ENCODE measurements at regions of chrX and their contacts with region 1.

Region 1: DNA sequence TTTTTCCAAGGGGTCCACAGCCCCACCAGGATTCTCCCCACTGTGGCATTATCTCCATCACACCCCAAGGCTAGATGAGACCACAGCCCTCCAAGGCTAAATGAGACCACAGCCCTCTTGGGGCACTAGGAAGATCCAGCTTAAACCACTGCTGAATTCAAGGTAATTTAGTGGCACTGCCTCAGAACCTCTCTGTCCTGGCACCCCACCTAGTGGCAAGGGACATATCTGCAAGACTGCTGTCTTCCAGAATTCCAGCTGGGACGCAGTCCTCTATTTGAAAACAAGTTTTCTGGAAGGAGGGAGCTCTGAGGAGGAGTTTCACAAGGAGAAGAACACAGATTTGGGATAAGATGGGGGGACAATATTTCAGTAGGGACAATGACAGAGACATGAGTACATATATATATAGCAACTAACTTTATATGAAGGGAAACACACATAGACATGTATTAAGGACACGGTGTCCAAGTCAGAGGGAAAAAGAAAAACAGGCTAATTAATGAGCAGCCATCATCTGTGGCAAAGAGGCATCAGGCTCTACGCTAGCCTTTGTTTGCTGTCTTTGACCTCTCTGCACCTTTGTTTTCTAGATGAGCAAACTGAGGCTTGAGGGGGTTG is 9.3 kb downstream of the CETN2 start:
- DNase-seq: no peak
- ATAC-seq: peak; percentile 64; the same call in 1 of the 2 replicates
- H3K4me3 ChIP-seq: no peak overlapping the region
- H3K27ac ChIP-seq: no peak overlapping the region
- H3K4me1 ChIP-seq: no peaks in the 10 kb centered on the region
- H3K27me3 ChIP-seq: peaks cover 4% of the 10 kb centered on the region; the same call in 1 of the 2 replicates
- CTCF ChIP-seq: peak; percentile 85

Region 2: DNA sequence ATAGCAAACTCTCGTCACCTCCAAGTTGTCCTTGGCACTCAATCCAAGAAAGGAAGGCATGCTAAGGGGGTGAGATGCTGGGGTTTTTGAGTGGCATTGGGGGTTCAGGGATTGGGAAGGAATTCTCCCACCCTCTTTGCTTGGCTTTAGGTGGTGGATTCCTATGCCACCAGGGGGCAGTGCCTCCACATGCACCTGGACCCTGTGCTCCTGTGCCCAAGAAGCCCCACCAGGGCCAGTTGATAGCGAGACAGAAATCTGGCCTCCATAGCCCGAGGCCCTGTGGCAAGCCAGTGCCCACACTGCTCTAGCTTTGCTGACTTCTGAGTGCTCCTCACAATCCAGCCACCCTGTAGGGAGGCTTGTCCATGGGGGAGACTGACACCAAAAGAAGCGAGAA is 1107.4 kb before region 1 on chrX:
- CTCF ChIA-PET with region 1: no interaction called
- POLR2A ChIA-PET with region 1: no interaction called
- in situ Hi-C with region 1: no loop called
- intact Hi-C with region 1: loop called (anchors 10 kb)
- DNase-seq: peak; percentile 5
- ATAC-seq: peak; percentile 93
- H3K4me3 ChIP-seq: no peak overlapping the region
- H3K27ac ChIP-seq: no peak overlapping the region
- H3K4me1 ChIP-seq: no peaks in the 10 kb centered on the region
- H3K27me3 ChIP-seq: no peaks in the 10 kb centered on the region
- CTCF ChIP-seq: peak; percentile 78

Region 3: DNA sequence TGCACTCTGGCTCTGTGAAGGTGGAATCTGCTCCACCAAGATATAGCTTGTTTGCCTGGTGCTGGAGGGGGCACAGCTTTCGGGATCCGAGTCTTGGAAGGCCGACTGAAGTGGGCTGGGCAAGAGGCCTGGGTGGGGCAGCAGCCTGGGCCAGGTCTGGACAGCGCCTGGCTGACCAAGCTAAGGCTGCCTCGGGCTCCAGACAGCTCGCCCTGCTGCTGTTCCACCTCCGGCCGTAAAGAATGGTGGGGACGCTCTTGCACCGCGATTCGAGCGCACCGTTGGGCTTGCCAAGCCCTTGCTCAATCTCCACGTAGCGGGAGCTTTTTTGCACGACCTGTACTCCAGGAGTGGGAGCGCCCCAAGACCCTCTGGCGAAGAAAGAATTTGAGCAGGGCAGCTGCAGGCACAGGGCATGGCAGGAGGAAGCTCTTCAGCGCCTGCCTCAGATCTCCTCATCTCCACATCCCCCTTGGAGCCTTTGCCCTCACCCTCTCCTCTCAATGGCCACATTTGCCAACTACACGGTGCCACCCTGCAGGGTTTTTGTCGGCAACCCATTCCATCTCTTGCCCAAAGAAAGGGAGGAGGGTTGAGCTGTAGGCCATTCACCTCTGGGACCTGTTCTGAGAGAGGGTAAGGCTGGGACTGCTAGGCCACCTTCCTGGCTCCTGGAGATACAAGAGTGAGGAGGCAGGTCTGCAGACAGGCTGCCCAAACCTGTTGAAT is 1067.8 kb before region 1 on chrX:
- CTCF ChIA-PET with region 1: no interaction called
- POLR2A ChIA-PET with region 1: no interaction called
- in situ Hi-C with region 1: no loop called
- intact Hi-C with region 1: loop called (anchors 2 kb)
- DNase-seq: peak; percentile 22
- ATAC-seq: peak; percentile 89
- H3K4me3 ChIP-seq: no peak overlapping the region
- H3K27ac ChIP-seq: no peak overlapping the region
- H3K4me1 ChIP-seq: no peaks in the 10 kb centered on the region
- H3K27me3 ChIP-seq: no peaks in the 10 kb centered on the region; the same call in 1 of the 2 replicates
- CTCF ChIP-seq: peak; percentile 88

Region 4: DNA sequence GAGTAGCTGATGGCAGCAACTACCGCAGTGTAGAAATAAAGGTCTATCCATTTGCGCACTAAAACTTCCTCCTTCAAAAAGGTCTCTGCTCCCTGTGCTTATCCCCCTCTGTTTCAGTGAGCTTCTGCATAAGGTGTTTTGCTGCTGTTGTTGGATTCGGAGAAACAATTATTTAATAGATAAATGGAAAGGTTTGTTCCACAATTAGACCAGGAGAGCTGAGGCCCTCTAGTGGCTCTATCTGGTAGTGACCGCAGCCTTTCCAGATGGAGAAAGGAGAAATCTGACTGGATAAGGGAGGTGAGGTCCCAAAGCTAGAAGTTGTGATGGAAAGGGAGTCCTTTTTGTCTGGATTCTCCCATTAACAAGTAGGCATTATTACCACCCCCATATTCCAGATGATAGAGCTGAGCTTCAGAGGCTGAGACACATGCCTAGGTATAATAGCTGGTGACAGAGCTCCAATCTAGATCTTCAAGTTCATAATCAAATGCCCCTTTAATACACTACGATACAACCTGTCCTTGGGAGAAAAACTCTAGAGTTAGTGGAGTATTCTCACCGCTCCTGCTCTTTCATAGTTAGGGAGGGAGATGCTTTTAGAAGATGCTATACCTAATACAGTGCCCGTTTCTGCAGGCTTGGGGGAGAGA is 188.7 kb before region 1 on chrX:
- CTCF ChIA-PET with region 1: no interaction called
- POLR2A ChIA-PET with region 1: no interaction called
- in situ Hi-C with region 1: loop called (anchors 25 kb)
- intact Hi-C with region 1: no loop called
- DNase-seq: peak; percentile 13
- ATAC-seq: peak; percentile 72; the same call in 1 of the 2 replicates
- H3K4me3 ChIP-seq: no peak overlapping the region
- H3K27ac ChIP-seq: no peak overlapping the region
- H3K4me1 ChIP-seq: no peaks in the 10 kb centered on the region
- H3K27me3 ChIP-seq: peaks cover 6% of the 10 kb centered on the region
- CTCF ChIP-seq: peak; percentile 87

Region 5: GRCh38 chrX:152641996-152642395 is 179.3 kb before region 1 on chrX:
- CTCF ChIA-PET with region 1: interaction called, 5 read pairs
- POLR2A ChIA-PET with region 1: no interaction called
- in situ Hi-C with region 1: loop called (anchors 25 kb)
- intact Hi-C with region 1: loop called (anchors 2 kb)
- DNase-seq: no peak
- ATAC-seq: peak; percentile 67; the same call in 1 of the 2 replicates
- H3K4me3 ChIP-seq: no peak overlapping the region
- H3K27ac ChIP-seq: no peak overlapping the region
- H3K4me1 ChIP-seq: no peaks in the 10 kb centered on the region
- H3K27me3 ChIP-seq: peaks cover 6% of the 10 kb centered on the region
- CTCF ChIP-seq: peak; percentile 50

Measured in Panc1 (cell line).